ENCODE measurements at regions of chr3 and their contacts with region 1.

Region 1: GRCh38 chr3:149129326-149130205 is at the start of gene HPS3:
- DNase-seq: peak; percentile 62 to 87 (median 71)
- ATAC-seq: peak; percentile 94
- H3K4me3 ChIP-seq: peak within 1 kb of the TSS; percentile 96
- H3K4me3 Mint-ChIP-seq: peak within 1 kb of the TSS; percentile 92 to 99 (median 96)
- H3K27ac ChIP-seq: peak within 1 kb of the TSS; percentile 70
- H3K27ac Mint-ChIP-seq: peak within 1 kb of the TSS; percentile 84 to 96 (median 90)
- H3K4me1 ChIP-seq: peaks cover 25 to 27% of the 10 kb centered on the region in 2 donors
- H3K4me1 Mint-ChIP-seq: peaks cover 20 to 53% (median 47%) of the 10 kb centered on the region in 7 donors
- H3K27me3 ChIP-seq: no peaks in the 10 kb centered on the region
- H3K27me3 Mint-ChIP-seq: peaks cover 0 to 24% (median 8%) of the 10 kb centered on the region in 5 donors
- total RNA-seq, gene HPS3: 13.6 to 25.8 (median 23.4) TPM

Region 2: DNA sequence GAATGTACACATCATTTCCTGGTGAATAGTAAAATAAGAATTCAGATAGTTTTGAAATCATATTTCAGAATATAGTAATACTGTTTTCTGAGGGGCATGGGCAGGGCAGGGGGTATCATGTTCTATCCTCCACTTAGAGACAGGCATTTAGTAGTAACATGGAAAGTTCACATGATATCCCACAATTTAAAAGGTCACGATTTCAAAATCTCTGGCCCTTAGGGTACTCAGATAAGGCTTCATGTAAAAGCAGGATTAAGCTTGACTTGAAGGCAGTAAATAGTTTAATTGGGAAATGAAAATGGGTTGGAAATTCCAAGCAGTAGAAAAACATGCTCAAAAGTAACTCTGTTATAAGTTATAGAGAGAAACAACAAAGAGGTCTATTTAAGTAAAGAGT is 785.0 kb before region 1 on chr3:
- CTCF ChIA-PET with region 1: no interaction called
- POLR2A ChIA-PET with region 1: no interaction called
- intact Hi-C with region 1: no loop called
- DNase-seq: no peak
- ATAC-seq: no peak
- H3K4me3 ChIP-seq: no peak overlapping the region
- H3K4me3 Mint-ChIP-seq: no peak overlapping the region
- H3K27ac ChIP-seq: no peak overlapping the region
- H3K27ac Mint-ChIP-seq: no peak overlapping the region
- H3K4me1 ChIP-seq: no peaks in the 10 kb centered on the region
- H3K4me1 Mint-ChIP-seq: no peaks in the 10 kb centered on the region
- H3K27me3 ChIP-seq: no peaks in the 10 kb centered on the region
- H3K27me3 Mint-ChIP-seq: no peaks in the 10 kb centered on the region

Region 3: DNA sequence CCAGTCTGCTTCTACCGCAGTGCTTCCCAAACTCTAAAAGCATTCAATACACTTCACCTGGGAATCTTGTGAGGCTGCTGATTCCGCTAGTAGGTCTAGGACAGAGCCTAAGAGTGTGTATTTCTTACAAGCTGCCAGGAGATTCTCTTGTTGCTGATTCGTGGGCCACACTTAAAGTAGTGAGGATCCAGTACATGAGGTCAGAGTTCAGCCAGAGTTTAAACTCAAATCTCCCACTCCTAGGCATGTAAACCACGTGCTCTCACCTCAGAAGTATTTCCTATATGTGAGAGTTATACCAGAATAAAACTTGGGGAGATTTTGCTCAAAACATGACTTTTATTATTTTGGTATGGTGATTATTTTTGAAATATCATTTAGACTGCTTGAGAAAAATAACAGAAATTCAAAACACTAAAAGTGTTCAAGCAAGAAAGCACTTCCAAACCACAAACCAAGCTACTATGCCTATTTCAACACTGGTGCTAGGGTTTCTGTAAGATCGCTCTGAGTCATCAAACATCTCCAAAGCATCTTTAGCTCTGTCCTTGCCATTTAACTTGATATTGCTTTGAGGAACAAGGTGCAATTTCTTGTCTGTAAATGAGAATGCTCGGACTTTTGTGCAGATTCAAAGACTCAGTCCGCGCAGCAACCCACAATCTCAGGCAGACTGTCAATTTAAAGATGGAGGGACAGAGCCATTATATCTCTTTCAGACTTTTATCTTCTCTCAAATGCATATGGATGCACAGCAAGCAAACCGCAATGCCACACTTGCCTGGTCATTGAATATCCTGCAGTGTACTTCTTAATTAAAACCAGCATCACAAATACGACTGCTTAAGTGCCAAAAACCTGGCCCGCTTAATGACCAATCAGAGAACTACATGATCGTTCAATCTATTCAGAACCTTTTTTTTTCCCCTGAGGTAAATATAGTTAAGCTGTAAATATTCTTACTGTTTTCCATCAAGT is 372.0 kb before region 1 on chr3:
- CTCF ChIA-PET with region 1: no interaction called
- POLR2A ChIA-PET with region 1: no interaction called
- intact Hi-C with region 1: no loop called
- DNase-seq: no peak
- ATAC-seq: peak; percentile 76
- H3K4me3 ChIP-seq: no peak overlapping the region
- H3K4me3 Mint-ChIP-seq: no peak overlapping the region
- H3K27ac ChIP-seq: no peak overlapping the region
- H3K27ac Mint-ChIP-seq: no peak overlapping the region
- H3K4me1 ChIP-seq: no peaks in the 10 kb centered on the region
- H3K4me1 Mint-ChIP-seq: no peaks in the 10 kb centered on the region
- H3K27me3 ChIP-seq: no peaks in the 10 kb centered on the region
- H3K27me3 Mint-ChIP-seq: peaks cover 0 to 7% (median 0%) of the 10 kb centered on the region in 5 donors

Region 4: DNA sequence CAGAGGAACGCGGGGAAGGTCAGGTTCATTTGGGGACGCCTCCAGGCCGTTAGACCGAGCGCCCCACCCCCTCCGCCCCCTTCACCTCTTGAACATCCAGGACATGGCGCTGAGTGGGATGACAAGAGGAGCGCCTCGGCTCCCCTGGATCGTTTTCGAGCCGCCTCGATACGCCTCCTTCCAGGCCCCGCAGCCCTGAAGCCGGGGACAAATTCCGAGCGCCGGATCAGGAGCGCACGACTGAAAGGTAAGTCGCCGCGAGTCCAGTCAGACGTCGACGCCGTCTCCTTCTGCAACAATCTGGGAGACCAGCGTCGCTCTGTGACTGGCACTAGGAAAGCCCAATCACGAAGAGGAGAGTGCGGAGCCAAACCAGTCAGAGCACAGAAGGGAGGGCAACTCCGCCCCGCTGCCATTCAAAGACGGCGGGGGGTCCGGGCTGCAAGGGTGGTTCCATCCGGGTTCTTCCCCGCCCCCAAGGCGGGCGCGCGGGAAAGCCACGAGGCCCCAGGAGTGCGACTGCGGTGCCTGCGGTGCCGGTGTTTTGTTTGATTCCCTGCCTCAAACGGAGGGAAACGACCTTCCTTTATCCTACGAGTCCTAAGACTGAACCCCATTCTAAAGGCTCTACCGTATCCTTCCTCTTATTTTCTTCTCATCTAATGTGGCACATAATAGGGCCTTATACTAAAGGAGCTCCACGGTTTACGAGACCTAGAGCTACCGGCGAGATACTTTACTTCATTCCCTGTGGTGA is 43.2 kb before region 1 on chr3 and contains the start of gene HLTF:
- CTCF ChIA-PET with region 1: no interaction called
- POLR2A ChIA-PET with region 1: no interaction called
- intact Hi-C with region 1: loop called (anchors 1 kb)
- DNase-seq: peak; percentile 75 to 93 (median 90)
- ATAC-seq: peak; percentile 99
- H3K4me3 ChIP-seq: peak within 1 kb of the TSS; percentile 97
- H3K4me3 Mint-ChIP-seq: peak within 1 kb of the TSS; percentile 84 to 100 (median 97)
- H3K27ac ChIP-seq: peak within 1 kb of the TSS; percentile 64
- H3K27ac Mint-ChIP-seq: peak within 1 kb of the TSS; percentile 54 to 95 (median 86)
- H3K4me1 ChIP-seq: peaks cover 4 to 18% of the 10 kb centered on the region in 2 donors
- H3K4me1 Mint-ChIP-seq: peaks cover 15 to 28% (median 22%) of the 10 kb centered on the region in 7 donors
- H3K27me3 ChIP-seq: no peaks in the 10 kb centered on the region
- H3K27me3 Mint-ChIP-seq: no peaks in the 10 kb centered on the region
- total RNA-seq, gene HLTF: 9.1 to 26.5 (median 17.3) TPM

Region 5: DNA sequence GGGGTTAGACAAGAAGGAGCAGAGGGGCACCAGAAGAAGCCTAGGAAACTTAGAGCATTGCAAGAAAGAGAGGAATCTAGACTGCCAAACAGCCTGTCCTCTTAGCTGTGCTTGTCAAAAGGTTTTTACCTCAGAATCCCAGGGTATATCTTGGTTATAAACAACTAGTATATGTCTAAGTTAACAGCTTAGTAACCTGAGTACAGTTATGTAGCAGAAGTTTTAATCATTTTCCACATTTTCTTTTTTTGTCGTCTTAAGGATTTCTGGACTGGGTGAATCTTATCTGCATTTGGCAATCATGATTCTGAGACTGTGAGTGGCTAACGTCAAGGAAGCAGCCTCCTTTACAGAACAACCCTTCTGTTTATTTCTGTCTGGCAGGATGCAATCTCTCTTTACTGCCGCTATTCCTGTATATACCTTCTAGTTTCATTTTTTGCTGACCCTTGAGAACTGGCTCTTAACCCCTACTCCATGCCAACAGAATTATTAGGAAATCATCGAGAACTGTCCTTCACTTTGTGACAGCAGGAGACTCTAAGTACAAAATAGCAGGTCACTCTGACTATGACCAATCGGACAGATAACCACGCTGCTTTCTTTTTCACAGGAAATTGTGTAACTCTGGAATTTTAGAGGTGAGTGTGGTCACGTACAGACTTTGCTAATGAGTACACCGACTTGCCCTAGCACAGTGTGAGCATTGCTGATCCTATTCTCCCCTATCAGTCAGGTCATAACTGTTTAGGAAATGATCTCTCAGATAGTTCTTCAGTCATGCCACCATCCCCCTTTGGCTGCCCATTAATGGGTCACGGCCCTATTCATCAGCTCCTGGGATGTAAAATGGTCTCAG is 95.4 kb after region 1 on chr3:
- CTCF ChIA-PET with region 1: no interaction called
- POLR2A ChIA-PET with region 1: no interaction called
- intact Hi-C with region 1: loop called in 1 of 2 experiments (anchors 1 kb)
- DNase-seq: peak in 2 of 9 donors; percentile 2 to 41
- ATAC-seq: peak; percentile 90
- H3K4me3 ChIP-seq: peak overlapping the region; percentile 47
- H3K4me3 Mint-ChIP-seq: peak overlapping the region; percentile 31 to 86 (median 82)
- H3K27ac ChIP-seq: no peak overlapping the region
- H3K27ac Mint-ChIP-seq: peak overlapping the region in 8 of 9 donors; percentile 1 to 90 (median 39)
- H3K4me1 ChIP-seq: peaks cover 0 to 7% of the 10 kb centered on the region in 2 donors
- H3K4me1 Mint-ChIP-seq: peaks cover 14 to 32% (median 25%) of the 10 kb centered on the region in 7 donors
- H3K27me3 ChIP-seq: no peaks in the 10 kb centered on the region
- H3K27me3 Mint-ChIP-seq: peaks cover 0 to 6% (median 0%) of the 10 kb centered on the region in 5 donors

Region 6: DNA sequence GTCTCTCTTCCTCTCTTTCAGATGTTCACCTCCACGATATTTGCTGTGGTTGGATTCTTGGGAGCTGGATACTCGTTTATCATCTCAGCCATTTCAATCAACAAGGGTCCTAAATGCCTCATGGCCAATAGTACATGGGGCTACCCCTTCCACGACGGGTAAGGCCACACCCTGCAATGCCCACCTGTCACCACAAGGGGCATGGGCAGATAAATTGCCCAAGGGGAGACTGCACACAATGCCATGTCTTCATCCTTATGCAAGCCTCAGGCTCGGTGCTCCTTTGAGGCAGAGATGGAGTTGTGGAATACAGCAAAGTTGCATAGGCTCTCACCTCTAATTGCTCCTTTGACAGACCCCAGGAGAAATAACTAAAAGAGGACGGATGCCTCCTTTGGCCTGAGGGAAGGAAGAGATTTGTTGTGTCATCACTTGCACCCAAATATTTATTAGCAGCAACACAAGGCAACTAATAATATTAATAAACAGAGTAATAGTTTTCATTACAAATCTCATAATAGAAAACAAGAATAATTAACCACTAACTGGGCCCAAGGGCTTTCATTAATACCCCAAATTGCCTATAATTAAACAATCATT is 358.1 kb after region 1 on chr3:
- CTCF ChIA-PET with region 1: no interaction called
- POLR2A ChIA-PET with region 1: no interaction called
- intact Hi-C with region 1: loop called in 1 of 2 experiments (anchors 5 kb)
- DNase-seq: peak in 1 of 9 donors; percentile 37
- ATAC-seq: peak; percentile 42
- H3K4me3 ChIP-seq: no peak overlapping the region
- H3K4me3 Mint-ChIP-seq: no peak overlapping the region
- H3K27ac ChIP-seq: no peak overlapping the region
- H3K27ac Mint-ChIP-seq: no peak overlapping the region
- H3K4me1 ChIP-seq: no peaks in the 10 kb centered on the region
- H3K4me1 Mint-ChIP-seq: peaks cover 0 to 2% (median 0%) of the 10 kb centered on the region in 7 donors
- H3K27me3 ChIP-seq: no peaks in the 10 kb centered on the region
- H3K27me3 Mint-ChIP-seq: peaks cover 5 to 21% (median 10%) of the 10 kb centered on the region in 5 donors

Measured in naive thymus-derived CD4-positive, alpha-beta T cell (primary cell).